ENCODE measurements at regions of chr2 and their contacts with region 1.

Region 1: DNA sequence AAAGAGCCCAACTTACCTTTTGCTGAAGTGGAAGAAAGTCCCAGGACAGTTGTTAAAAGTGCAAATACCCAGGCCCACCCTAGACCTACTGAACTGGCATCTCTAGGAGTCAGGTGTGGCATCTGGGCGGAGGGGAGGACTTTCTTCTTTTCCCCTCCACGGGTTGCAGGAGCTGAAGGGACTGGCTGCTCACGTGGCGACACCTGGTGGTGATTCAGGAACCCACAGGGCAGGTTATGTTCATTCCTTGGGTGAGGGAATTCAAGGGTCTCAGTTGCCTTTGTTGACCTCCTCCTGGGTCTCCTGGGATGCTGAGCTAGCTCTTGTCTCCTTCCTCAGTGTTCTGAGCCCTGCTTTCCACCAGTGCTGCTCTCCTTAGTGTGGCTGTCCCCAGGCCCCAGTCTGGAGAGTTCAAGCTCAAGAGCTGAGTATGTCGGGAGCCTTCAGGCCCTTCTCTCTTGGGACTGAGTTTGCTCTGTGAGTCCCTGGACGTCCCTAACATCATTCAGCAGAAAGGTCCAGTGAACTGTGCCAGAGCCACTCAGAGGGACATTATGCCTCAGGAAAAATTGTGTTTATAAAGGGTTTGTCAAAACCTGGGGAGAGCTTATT is 56.9 kb downstream of the DYSF start:
- DNase-seq: peak; percentile 81
- H3K4me3 Mint-ChIP-seq: no peak overlapping the region
- H3K27ac Mint-ChIP-seq: no peak overlapping the region
- H3K4me1 Mint-ChIP-seq: no peaks in the 10 kb centered on the region
- H3K27me3 Mint-ChIP-seq: no peaks in the 10 kb centered on the region
- CTCF ChIP-seq: peak; percentile 71

Region 2: GRCh38 chr2:71157124-71157793 is 353.0 kb before region 1 on chr2:
- CTCF ChIA-PET with region 1: interaction called, 3 read pairs
- intact Hi-C with region 1: loop called (anchors 2 kb)
- DNase-seq: peak; percentile 70
- H3K4me3 Mint-ChIP-seq: peak overlapping the region; percentile 5
- H3K27ac Mint-ChIP-seq: no peak overlapping the region
- H3K4me1 Mint-ChIP-seq: peaks cover 16% of the 10 kb centered on the region
- H3K27me3 Mint-ChIP-seq: peaks cover 52% of the 10 kb centered on the region
- CTCF ChIP-seq: peak; percentile 80

Region 3: GRCh38 chr2:71299507-71299906 is 210.8 kb before region 1 on chr2:
- CTCF ChIA-PET with region 1: interaction called, 47 read pairs
- intact Hi-C with region 1: loop called (anchors 1 kb)
- DNase-seq: peak; percentile 4
- H3K4me3 Mint-ChIP-seq: no peak overlapping the region
- H3K27ac Mint-ChIP-seq: no peak overlapping the region
- H3K4me1 Mint-ChIP-seq: no peaks in the 10 kb centered on the region
- H3K27me3 Mint-ChIP-seq: no peaks in the 10 kb centered on the region
- CTCF ChIP-seq: peak; percentile 55

Region 4: DNA sequence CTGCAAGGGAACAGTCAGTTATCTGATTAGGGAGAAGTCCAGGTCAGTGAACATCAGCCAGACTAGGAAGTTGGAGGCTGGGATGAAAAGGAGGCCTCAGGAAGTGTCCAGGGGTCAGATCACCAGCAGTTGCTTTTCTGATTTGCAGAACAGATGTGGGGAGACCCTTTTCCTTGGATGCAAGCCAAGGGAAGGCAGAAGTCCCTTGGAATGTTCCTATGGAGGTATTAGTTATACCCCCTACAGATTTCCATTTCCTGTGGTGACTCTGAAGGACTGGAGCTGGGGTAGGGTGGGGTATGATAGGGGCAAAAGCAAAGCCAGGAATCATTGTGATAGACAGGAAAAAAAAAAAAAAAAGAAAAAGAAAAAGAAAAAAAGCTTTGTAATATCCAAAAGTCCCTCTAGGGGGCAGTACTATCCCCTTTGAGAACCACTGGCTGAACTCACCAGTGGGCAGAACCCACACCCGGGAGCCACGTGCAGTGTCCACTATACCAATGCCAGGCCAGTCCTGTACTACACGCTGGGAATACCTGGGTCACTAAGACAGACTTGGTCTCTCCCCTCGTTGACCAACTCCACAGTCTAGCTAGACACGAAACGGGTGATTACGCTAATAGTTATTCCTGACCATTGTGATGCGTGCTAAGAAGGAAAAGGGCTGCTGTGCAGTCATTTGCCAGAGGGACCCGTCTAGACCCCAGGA is 49.6 kb before region 1 on chr2:
- CTCF ChIA-PET with region 1: interaction called, 31 read pairs
- intact Hi-C with region 1: loop called (anchors 2 kb)
- DNase-seq: no peak
- H3K4me3 Mint-ChIP-seq: no peak overlapping the region
- H3K27ac Mint-ChIP-seq: no peak overlapping the region
- H3K4me1 Mint-ChIP-seq: peaks cover 33% of the 10 kb centered on the region
- H3K27me3 Mint-ChIP-seq: peaks cover 6% of the 10 kb centered on the region
- CTCF ChIP-seq: peak; percentile 72

Measured in Calu3 (cell line).